ENCODE measurements at regions of chr4 and their contacts with region 1.

Region 1: DNA sequence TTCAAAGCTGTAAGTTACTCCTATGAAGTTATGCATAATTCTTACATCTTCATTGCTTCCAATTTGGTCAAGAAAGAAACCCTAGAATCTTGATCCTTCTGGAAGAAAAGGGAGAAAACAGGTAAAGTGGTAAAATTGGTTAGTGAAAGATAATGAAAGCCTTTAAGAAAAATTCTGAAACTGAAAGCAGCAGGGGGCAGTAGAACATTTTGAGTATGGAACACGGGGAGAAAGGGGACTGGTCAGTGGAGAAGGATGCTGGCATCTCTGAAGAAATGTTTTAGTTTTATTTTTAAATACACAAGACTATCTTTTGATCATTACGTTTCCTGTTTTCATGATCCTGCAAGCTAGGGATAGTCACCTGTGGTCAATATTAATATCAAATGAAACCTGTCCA is 54.3 kb downstream of the SLIT2 start:
- DNase-seq: peak; percentile 59
- ATAC-seq: peak; percentile 65
- H3K4me3 ChIP-seq: no peak overlapping the region
- H3K27ac ChIP-seq: no peak overlapping the region
- H3K4me1 ChIP-seq: no peaks in the 10 kb centered on the region
- H3K27me3 ChIP-seq: no peaks in the 10 kb centered on the region
- CTCF ChIP-seq: peak; percentile 54
- POLR2A ChIP-seq: no peak
- RAD21 ChIP-seq: peak; percentile 47

Region 2: GRCh38 chr4:20178902-20179576 is 126.9 kb before region 1 on chr4:
- CTCF ChIA-PET with region 1: no interaction called
- POLR2A ChIA-PET with region 1: no interaction called
- dilution Hi-C with region 1: no loop called
- in situ Hi-C with region 1: no loop called
- intact Hi-C with region 1: no loop called
- DNase-seq: no peak
- ATAC-seq: no peak
- H3K4me3 ChIP-seq: no peak overlapping the region
- H3K27ac ChIP-seq: no peak overlapping the region
- H3K4me1 ChIP-seq: no peaks in the 10 kb centered on the region
- H3K27me3 ChIP-seq: no peaks in the 10 kb centered on the region
- CTCF ChIP-seq: no peak
- POLR2A ChIP-seq: no peak
- RAD21 ChIP-seq: no peak

Region 3: DNA sequence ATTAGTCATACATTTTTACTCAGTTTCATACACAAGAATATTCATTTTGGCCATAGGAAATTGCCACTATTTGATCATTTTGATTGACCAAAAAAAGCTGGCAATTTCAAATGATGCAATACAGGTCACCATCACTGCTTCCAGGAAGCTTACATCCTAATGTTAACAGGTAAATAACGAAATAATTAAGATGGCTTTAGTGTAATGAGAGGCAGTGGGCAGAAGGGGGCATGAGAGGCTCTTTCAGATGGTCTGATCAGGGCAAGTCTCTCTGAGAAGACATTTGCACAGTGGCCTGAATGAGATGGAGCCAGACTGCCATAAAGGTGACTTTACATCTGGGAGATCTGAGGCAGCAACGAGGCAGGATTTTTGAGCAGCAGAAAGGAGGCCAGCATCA is 116.4 kb after region 1 on chr4:
- CTCF ChIA-PET with region 1: interaction called, 18 read pairs
- POLR2A ChIA-PET with region 1: no interaction called
- dilution Hi-C with region 1: no loop called
- in situ Hi-C with region 1: loop called (anchors 10 kb)
- intact Hi-C with region 1: no loop called
- DNase-seq: peak; percentile 52
- ATAC-seq: peak; percentile 72
- H3K4me3 ChIP-seq: no peak overlapping the region
- H3K27ac ChIP-seq: no peak overlapping the region
- H3K4me1 ChIP-seq: no peaks in the 10 kb centered on the region
- H3K27me3 ChIP-seq: no peaks in the 10 kb centered on the region
- CTCF ChIP-seq: peak; percentile 62
- POLR2A ChIP-seq: no peak
- RAD21 ChIP-seq: peak; percentile 61

Region 4: DNA sequence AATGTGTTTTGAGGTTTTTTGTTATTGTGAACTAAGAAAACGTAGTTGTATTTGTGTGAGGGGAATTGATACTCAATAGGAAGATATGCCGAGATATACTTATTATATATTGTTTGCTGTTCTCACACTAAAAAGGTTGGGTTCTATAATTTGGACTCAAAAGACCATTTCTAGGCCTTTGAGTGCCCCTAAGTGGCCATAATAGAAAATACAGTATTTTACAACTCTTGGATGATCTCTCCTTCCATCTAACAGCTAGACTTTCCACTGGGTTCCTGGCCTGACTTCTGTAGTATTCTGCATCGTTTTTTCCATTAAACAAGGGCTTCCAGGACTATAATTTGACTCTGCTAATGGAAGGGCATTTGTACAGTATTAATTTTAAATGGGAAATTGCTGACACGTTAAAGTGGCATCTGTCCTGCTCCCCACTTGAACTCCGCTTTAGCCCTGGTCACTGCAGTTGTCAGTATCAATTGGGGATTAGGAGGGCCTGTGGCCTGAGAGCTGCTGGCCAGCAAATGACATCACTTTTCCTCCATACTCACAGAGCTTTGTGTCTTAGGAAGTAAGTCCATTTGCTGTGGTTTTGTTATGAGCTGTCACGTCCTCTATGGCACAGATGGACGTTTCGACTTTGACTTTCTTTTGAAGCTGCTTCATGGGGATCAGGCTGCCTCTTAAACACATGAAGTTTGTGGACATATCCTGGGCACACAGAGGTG is 122.6 kb after region 1 on chr4:
- CTCF ChIA-PET with region 1: interaction called, 18 read pairs
- POLR2A ChIA-PET with region 1: no interaction called
- dilution Hi-C with region 1: no loop called
- in situ Hi-C with region 1: loop called (anchors 10 kb)
- intact Hi-C with region 1: loop called (anchors 2 kb)
- DNase-seq: peak; percentile 20
- ATAC-seq: peak; percentile 64
- H3K4me3 ChIP-seq: no peak overlapping the region
- H3K27ac ChIP-seq: no peak overlapping the region
- H3K4me1 ChIP-seq: no peaks in the 10 kb centered on the region; the same call in 1 of the 2 replicates
- H3K27me3 ChIP-seq: no peaks in the 10 kb centered on the region
- CTCF ChIP-seq: peak; percentile 50
- POLR2A ChIP-seq: no peak
- RAD21 ChIP-seq: peak; percentile 59

Region 5: GRCh38 chr4:20625426-20625825 is 319.4 kb after region 1 on chr4:
- CTCF ChIA-PET with region 1: no interaction called
- POLR2A ChIA-PET with region 1: no interaction called
- dilution Hi-C with region 1: no loop called
- in situ Hi-C with region 1: no loop called
- intact Hi-C with region 1: no loop called
- DNase-seq: no peak
- ATAC-seq: no peak
- H3K4me3 ChIP-seq: no peak overlapping the region
- H3K27ac ChIP-seq: no peak overlapping the region
- H3K4me1 ChIP-seq: no peaks in the 10 kb centered on the region
- H3K27me3 ChIP-seq: no peaks in the 10 kb centered on the region
- CTCF ChIP-seq: no peak
- POLR2A ChIP-seq: no peak
- RAD21 ChIP-seq: no peak

Measured in IMR-90 (cell line).